IMR-90 (cell line): ENCODE measurements at regions of chr7 and their contacts with region 1.

Region 1: DNA sequence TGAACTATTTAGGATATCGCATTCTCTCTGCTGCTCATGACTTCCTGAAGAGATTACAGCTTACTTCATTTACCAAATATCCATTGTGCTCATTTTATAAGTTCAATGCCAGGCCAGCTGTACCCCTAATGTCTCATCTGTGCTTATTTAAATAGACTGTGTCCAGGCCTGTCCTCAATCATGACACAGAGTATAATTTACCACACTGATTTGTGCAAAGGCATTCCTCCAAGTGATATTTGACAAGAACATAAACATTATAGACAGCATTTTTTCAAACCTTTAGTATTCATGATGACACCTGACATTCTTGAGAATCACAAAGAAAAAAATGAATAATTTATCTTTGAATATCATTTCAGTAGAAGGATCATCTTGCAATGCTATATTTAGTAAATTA is 260.1 kb upstream of the SEMA3D start:
- DNase-seq: no peak
- ATAC-seq: no peak
- H3K4me3 ChIP-seq: no peak overlapping the region
- H3K27ac ChIP-seq: no peak overlapping the region
- H3K4me1 ChIP-seq: no peaks in the 10 kb centered on the region
- H3K27me3 ChIP-seq: no peaks in the 10 kb centered on the region
- CTCF ChIP-seq: no peak
- POLR2A ChIP-seq: no peak
- RAD21 ChIP-seq: no peak

Region 2: DNA sequence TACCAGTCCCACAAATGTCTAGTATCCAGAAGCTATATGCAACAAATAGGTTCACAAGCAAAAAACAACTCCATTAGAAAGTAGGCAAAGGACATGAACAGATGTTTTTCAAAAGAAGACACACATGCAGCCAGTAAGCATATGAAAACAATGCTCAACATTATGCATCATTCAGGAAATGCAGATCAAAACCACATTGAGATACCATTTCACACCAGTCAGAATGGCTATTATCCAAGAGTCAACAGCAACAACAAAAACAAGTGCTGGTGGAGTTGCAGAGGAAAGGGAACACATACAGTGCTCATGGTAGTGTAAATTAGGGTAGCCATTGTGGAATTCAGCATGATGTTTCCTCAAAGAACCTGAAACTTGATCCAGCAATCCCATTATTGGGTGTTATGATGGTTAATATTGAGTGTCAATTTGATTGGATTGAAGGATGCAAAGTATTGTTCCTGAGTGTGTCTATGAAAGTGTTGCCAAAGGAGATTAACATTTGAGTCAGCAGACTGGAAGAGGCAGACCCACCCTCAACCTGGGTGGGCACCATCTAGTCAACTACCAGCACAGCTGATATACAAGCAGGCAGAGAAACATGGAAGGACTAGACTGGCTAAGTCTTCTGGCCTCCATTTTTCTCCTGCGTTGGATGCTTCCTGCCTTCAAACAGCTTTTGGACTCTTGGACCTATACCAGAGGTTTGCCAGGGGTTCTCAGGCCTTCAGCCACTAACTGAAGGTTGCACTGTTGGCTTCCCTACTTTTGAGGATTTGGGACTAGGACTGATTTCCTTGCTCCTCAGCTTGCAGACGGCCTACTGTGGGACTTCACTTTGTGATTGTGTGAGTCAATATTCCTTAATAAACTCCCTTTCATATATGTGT is 41.7 kb before region 1 on chr7:
- CTCF ChIA-PET with region 1: no interaction called
- POLR2A ChIA-PET with region 1: no interaction called
- dilution Hi-C with region 1: no loop called
- in situ Hi-C with region 1: no loop called
- intact Hi-C with region 1: loop called (anchors 1 kb)
- DNase-seq: no peak
- ATAC-seq: no peak
- H3K4me3 ChIP-seq: no peak overlapping the region
- H3K27ac ChIP-seq: no peak overlapping the region
- H3K4me1 ChIP-seq: no peaks in the 10 kb centered on the region
- H3K27me3 ChIP-seq: no peaks in the 10 kb centered on the region
- CTCF ChIP-seq: no peak
- POLR2A ChIP-seq: no peak
- RAD21 ChIP-seq: no peak